ENCODE measurements at regions of chr12 and their contacts with region 1.

Region 1: GRCh38 chr12:132908145-132909044 is 21.0 kb upstream of the CHFR start:
- DNase-seq: peak; percentile 95 to 98
- H3K4me3 ChIP-seq: peak overlapping the region; percentile 55 to 70
- H3K27ac ChIP-seq: peak overlapping the region; percentile 82 to 88
- H3K4me1 ChIP-seq: peaks cover 0 to 15% (median 10%) of the 10 kb centered on the region in 4 donors
- H3K27me3 ChIP-seq: no peaks in the 10 kb centered on the region
- CTCF ChIP-seq: peak in 1 of 2 experiments; percentile 9

Region 2: DNA sequence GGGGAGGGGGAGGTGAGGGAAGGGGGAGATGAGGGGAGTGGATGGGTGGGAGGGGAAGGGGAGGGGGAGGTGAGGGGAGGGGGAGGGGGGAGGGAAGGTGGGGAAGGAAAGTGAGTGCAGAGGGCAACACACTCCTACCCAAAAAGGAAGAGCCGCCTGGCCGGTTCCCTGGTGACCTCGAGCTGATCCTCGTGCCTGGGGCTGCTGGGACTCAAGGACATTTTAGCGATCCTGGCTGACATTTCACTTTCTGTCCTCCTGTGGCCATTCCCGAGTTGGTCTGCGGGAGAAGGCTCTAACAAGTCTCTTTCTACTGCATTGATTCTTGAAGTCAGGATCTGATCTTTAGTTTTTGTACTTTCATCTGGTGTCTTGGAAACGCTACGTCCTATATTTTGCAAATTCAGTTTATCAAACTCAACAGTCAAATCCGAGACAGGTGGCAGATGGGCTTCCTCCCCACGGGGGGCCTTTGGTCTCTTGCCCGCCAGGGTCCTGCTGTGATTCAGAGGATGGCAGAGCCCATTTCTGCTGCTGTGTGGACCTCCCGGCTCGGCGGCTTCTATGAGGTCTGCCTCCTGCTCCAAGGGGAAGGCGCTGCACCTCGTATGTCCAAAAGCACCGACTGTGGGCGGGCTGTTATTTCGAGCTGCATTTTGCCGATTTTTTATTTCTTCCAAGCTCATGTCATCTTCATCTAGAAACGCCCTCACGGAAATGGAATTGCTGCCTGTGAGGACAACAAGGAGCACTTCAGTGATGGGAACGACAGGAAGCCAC is 178.7 kb before region 1 on chr12:
- intact Hi-C with region 1: no loop called
- DNase-seq: no peak
- H3K4me3 ChIP-seq: no peak overlapping the region
- H3K27ac ChIP-seq: no peak overlapping the region
- H3K4me1 ChIP-seq: no peaks in the 10 kb centered on the region
- H3K27me3 ChIP-seq: no peaks in the 10 kb centered on the region
- CTCF ChIP-seq: no peak

Region 3: DNA sequence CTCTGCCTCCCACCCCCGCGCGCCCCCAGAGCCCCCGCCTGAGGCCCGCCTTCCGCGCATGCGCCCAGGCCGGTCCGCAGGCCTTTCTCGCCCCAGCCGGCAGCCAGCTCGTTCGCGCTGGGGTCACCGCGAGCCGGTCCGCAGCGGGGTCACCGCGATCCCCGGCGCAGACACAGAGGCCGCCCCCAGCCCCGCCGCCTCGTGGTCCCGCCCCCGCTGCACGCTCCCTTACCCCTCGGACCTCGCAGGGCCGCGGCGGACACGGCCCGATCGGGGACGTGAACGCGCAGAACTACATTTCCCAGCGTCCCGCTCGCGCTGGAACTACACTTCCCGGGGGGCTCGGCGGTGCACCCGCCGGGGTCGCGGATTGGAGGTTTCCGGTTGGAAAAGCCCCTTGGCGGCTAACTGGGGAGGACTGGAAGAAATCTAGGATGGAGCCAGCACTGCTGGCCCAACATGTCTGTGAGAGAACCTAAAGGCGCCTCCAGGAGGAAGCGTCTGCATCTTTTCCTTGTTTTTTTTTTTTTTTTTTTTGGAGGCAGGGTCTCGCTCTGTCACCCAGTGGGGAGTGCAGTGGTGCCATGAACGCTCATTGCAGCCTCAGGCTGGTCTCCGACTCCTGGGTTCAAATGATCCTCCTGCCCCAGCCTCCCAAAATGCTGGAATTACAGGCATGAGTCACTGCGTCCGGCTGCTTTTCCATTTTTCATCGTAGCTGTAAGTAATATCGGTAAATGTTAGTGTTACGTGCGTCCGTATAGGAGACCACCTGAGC is 47.8 kb after region 1 on chr12 and contains the start of gene ZNF605:
- intact Hi-C with region 1: loop called (anchors 5 kb)
- DNase-seq: peak; percentile 81 to 91
- H3K4me3 ChIP-seq: peak within 1 kb of the TSS; percentile 76 to 89
- H3K27ac ChIP-seq: peak within 1 kb of the TSS; percentile 85 to 92
- H3K4me1 ChIP-seq: peaks cover 0 to 23% (median 11%) of the 10 kb centered on the region in 4 donors
- H3K27me3 ChIP-seq: no peaks in the 10 kb centered on the region
- CTCF ChIP-seq: no peak

Region 4: DNA sequence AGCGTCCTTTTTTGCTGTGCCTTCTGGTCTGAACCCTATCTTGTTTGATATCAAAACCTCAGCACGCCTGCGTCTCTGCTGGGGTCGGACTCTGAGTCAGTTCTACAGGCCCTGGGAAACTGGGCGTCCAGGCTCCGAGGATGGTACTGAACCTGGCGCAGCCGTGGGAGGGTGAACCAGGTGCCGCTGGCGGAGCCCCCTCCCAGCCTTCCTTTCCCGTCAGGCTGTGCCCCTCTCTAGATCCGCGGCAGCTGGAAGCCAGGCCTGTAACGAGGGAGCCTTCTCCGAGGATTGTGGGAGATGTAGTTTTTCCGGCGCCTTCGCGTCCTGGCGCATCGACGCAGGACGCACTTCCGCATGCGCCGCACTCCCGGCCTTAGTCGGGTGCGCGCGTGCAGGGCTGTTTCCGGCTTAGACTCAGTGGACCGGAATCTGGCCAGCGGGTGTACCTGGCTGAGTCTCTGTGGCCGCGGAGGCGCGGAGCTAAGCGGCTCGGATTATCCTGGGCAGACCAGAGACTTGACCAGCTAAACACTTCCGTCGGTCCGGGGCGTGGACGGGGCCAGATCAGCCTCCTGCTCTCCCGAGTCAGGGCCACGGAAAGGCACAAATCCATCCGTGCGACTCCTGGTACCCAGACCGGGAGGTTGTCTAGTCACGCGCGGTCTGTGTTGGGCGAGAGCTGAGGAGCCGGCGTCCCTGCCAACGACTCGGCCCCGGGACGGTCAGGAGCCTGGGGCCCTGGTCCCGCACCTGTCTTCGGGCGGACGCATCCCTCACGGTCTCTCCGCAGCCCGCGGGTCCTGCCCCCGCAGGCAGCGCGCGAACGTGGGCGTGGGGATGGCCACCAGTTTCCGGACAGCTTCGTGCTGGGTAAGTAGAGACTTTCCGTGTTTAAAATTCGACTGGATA is 77.9 kb after region 1 on chr12 and contains the start of gene ZNF26:
- intact Hi-C with region 1: no loop called
- DNase-seq: peak; percentile 87 to 93
- H3K4me3 ChIP-seq: peak within 1 kb of the TSS; percentile 82 to 96
- H3K27ac ChIP-seq: peak within 1 kb of the TSS; percentile 80 to 84
- H3K4me1 ChIP-seq: peaks cover 0 to 21% (median 10%) of the 10 kb centered on the region in 4 donors
- H3K27me3 ChIP-seq: no peaks in the 10 kb centered on the region
- CTCF ChIP-seq: no peak